Heart left ventricle (tissue), 16 donors: ENCODE measurements at regions of chr1 and their contacts with region 1.

Region 1: GRCh38 chr1:70354332-70355110 is at the start of gene ANKRD13C:
- DNase-seq: peak; percentile 93 to 96 (median 95)
- ATAC-seq: peak; percentile 99
- H3K4me3 ChIP-seq: peak within 1 kb of the TSS; percentile 71 to 95 (median 86)
- H3K27ac ChIP-seq: peak within 1 kb of the TSS; percentile 78 to 96 (median 90)
- H3K4me1 ChIP-seq: peaks cover 0 to 49% (median 35%) of the 10 kb centered on the region in 12 donors
- H3K27me3 ChIP-seq: no peaks in the 10 kb centered on the region
- CTCF ChIP-seq: no peak
- POLR2A ChIP-seq: peak in 1 of 2 donors; percentile 77
- total RNA-seq, gene ANKRD13C: 8.5 to 14.8 (median 11.1) TPM

Region 2: GRCh38 chr1:70156529-70157120 is 197.9 kb before region 1 on chr1:
- intact Hi-C with region 1: no loop called
- DNase-seq: no peak
- ATAC-seq: no peak
- H3K4me3 ChIP-seq: no peak overlapping the region
- H3K27ac ChIP-seq: no peak overlapping the region
- H3K4me1 ChIP-seq: no peaks in the 10 kb centered on the region
- H3K27me3 ChIP-seq: no peaks in the 10 kb centered on the region
- CTCF ChIP-seq: no peak
- POLR2A ChIP-seq: no peak

Region 3: DNA sequence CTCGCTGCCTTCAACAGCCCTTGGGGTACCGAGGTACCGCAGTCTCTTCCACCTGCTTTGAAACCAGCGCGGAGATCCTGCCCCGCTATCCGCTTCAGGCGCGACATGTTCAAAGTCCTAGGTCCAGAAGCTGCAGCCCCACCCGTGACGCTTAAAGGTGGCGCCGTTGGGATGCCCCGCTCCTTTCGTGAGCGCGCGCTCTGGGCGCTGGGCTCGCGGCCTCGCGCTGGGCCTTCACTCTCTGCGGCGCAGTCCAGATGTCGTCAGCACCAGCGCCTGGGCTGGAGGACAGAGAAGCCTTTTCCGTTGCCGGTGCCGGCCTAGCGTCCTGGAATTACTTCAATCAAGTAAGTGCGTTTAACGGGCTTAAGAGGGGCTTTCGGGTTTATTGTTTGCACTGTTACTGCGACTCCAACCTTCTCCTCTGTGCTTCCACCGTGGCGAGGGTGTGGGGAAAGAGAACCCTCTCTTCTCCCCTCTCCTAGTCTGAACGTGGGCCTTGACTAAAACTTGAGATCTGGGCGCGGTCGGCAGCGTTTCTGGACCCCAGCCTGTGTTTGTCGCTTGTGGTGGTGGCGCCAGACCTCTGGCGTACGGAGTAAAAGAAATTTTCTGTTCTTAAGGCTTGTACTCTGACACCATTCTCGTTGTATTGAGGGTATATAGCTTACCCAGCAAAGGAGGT is 148.9 kb before region 1 on chr1 and contains the start of gene LRRC40:
- intact Hi-C with region 1: loop called in 3 of 10 experiments (anchors 5 to 10 kb)
- DNase-seq: peak; percentile 96 to 97 (median 97)
- ATAC-seq: peak; percentile 97 to 100 (median 99)
- H3K4me3 ChIP-seq: peak within 1 kb of the TSS; percentile 54 to 90 (median 74)
- H3K27ac ChIP-seq: peak within 1 kb of the TSS; percentile 85 to 95 (median 89)
- H3K4me1 ChIP-seq: peaks cover 0 to 63% (median 35%) of the 10 kb centered on the region in 12 donors
- H3K27me3 ChIP-seq: no peaks in the 10 kb centered on the region
- CTCF ChIP-seq: peak in 2 of 12 donors; percentile 5 to 8
- POLR2A ChIP-seq: peak in 1 of 2 donors; percentile 75
- total RNA-seq, gene LRRC40: 8.4 to 13.0 (median 11.2) TPM